ENCODE measurements at regions of chr15 and their contacts with region 1.

Region 1: GRCh38 chr15:98292442-98293240 is 332.1 kb downstream of the ARRDC4 start:
- DNase-seq: peak; percentile 32 to 85
- H3K4me3 ChIP-seq: no peak overlapping the region
- H3K4me1 ChIP-seq: no peaks in the 10 kb centered on the region
- H3K27me3 ChIP-seq: peaks cover 16% of the 10 kb centered on the region; the same call in 1 of the 2 replicates

Region 2: GRCh38 chr15:98421419-98422129 is 128.9 kb after region 1 on chr15:
- in situ Hi-C with region 1: loop called (anchors 5 kb)
- DNase-seq: peak; percentile 52 to 86
- H3K4me3 ChIP-seq: peak overlapping the region; percentile 10; the same call in 1 of the 2 replicates
- H3K4me1 ChIP-seq: peaks cover 3% of the 10 kb centered on the region; the same call in 1 of the 2 replicates
- H3K27me3 ChIP-seq: peaks cover 14% of the 10 kb centered on the region

Region 3: GRCh38 chr15:99104788-99105513 is 812.3 kb after region 1 on chr15 and contains the start of gene SYNM:
- in situ Hi-C with region 1: no loop called
- DNase-seq: peak; percentile 77 to 88
- H3K4me3 ChIP-seq: peak within 1 kb of the TSS; percentile 56
- H3K4me1 ChIP-seq: no peaks in the 10 kb centered on the region; the same call in 1 of the 2 replicates
- H3K27me3 ChIP-seq: no peaks in the 10 kb centered on the region

Region 4: DNA sequence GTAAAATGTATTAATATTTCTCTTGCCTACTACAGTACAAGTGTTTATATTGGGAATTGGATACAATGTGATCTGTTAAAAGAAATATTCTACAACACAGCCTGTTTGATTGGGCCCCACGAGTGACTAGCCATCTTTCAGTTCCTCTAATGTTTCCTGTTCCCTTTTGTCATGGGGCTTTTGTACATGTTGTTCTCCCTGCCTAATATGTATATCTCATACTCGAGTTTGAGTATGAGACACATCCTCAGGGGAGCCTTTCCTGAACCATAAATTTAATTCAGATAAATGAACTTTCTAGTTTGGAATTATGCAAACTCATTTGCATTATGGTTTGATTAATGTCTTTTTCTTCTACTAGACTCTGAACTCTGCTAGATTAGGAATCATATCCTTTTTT is 1338.6 kb after region 1 on chr15:
- in situ Hi-C with region 1: no loop called
- DNase-seq: no peak
- H3K4me3 ChIP-seq: no peak overlapping the region
- H3K4me1 ChIP-seq: peaks cover 27% of the 10 kb centered on the region
- H3K27me3 ChIP-seq: no peaks in the 10 kb centered on the region